HEK293T (cell line): ENCODE measurements at regions of chr1 and their contacts with region 1.

Region 1: DNA sequence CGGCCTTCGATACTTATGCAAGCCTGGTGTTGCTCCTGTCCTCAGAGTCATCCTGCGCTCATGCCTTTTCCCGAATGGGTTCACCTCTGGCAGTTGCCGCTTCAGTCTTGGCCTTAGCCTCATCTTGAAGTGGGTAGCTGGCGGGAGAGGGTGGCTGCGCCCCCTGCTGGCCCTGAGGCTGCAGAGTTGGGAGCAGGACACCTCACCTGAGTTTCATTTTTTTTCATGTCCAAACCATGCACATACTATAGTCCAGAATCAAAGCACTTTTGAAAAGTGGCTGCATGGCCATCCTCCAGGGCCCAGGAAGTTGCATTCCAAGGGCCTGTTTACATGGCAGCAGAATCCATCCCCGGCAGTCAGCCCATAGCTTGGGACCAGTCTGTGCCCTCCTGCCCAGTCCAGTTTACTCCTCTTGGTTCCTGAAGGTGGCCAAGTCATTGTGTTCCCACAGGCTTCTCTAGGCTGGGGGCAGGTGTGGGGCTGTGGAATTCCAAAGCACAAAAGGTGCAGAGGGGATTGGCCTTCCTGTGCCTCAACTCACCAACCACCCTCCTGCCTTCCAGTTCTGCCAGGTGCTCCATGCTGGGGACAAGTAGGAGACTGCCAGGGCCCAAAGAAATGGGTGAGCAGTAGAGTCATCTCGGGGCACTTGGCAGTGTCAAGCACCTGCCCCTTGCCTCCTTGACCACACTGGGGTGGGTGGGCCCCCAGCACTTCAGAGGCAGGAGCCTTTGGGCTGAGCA is 44.0 kb downstream of the YARS1 start:
- DNase-seq: peak; percentile 95

Region 2: DNA sequence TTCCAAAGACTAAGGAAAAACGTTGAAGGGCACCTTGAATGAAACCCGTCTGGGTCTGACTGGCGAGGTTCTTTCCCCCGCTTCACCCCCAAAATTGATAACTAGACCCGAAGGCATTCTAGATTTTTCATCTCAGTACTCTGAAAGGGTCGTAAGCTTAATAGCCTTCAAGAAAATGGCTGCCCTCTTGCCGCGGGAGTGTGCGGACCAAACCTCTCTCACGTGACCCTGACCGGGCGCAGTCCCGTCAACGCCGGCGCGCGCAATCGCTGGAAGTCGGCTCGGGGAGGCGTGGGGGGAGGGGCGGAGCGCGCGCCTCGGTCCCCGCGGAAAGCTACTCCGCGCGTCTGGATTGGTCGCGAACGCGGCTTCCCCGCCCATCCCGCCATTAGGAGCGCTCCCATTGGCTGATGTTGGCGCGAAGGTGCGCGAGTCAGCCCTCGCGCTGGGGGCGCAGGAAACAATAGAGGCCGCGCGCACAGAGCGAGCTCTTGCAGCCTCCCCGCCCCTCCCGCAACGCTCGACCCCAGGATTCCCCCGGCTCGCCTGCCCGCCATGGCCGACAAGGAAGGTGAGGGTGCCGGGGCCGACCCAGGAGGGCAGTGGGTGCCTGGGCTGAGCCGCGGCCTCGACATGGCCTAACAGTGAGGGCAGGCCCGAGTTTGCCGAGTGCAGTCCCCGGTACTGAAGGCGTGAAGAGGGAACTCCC is 122.3 kb before region 1 on chr1 and contains the start of gene RBBP4:
- CTCF ChIA-PET with region 1: no interaction called
- POLR2A ChIA-PET with region 1: no interaction called
- DNase-seq: peak; percentile 100

Region 3: GRCh38 chr1:32753532-32754312 is 19.5 kb before region 1 on chr1:
- CTCF ChIA-PET with region 1: interaction called, 10 read pairs
- POLR2A ChIA-PET with region 1: no interaction called
- DNase-seq: peak; percentile 100